ENCODE measurements at regions of chr20 and their contacts with region 1.

Region 1: GRCh38 chr20:50731055-50731871 is at the start of gene PARD6B:
- DNase-seq: peak; percentile 100
- H3K4me3 Mint-ChIP-seq: peak within 1 kb of the TSS; percentile 61
- H3K27ac Mint-ChIP-seq: peak within 1 kb of the TSS; percentile 99
- H3K4me1 Mint-ChIP-seq: peaks cover 56% of the 10 kb centered on the region
- H3K27me3 Mint-ChIP-seq: no peaks in the 10 kb centered on the region
- CTCF ChIP-seq: no peak
- total RNA-seq, gene PARD6B: 114 and 127 TPM in 2 replicates

Region 2: GRCh38 chr20:50625986-50626677 is 105.1 kb before region 1 on chr20:
- CTCF ChIA-PET with region 1: interaction called, 13 read pairs
- intact Hi-C with region 1: no loop called
- DNase-seq: peak; percentile 91
- H3K4me3 Mint-ChIP-seq: no peak overlapping the region
- H3K27ac Mint-ChIP-seq: peak overlapping the region; percentile 72
- H3K4me1 Mint-ChIP-seq: peaks cover 44% of the 10 kb centered on the region
- H3K27me3 Mint-ChIP-seq: no peaks in the 10 kb centered on the region
- CTCF ChIP-seq: peak; percentile 97

Region 3: DNA sequence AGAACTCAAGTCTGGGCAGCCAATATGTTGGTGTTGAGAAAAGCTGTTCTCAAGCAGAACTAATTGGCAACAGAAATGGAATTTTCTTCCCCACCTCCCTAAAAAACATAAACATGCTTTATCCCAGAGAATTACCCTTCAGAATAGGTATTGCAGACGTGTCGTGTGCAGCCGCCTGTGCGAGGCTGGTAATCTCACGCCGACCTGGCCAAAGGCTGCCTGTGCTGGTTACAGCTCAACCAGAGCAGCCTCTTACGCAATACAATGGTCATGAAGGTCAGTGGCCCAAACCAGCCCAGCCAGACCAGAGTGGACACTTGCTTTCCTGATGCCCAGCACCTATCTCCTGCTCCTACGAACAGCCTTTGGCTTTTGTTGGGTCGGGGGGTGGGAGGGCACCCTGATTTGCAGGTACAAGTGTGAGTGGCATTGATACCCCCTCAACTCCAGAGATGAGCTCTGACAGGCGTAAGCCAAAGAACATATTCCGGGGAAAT is 50.8 kb before region 1 on chr20:
- CTCF ChIA-PET with region 1: interaction called, 28 read pairs
- intact Hi-C with region 1: loop called (anchors 1 kb)
- DNase-seq: peak; percentile 83
- H3K4me3 Mint-ChIP-seq: peak overlapping the region; percentile 62
- H3K27ac Mint-ChIP-seq: peak overlapping the region; percentile 84
- H3K4me1 Mint-ChIP-seq: peaks cover 48% of the 10 kb centered on the region
- H3K27me3 Mint-ChIP-seq: no peaks in the 10 kb centered on the region
- CTCF ChIP-seq: no peak

Region 4: DNA sequence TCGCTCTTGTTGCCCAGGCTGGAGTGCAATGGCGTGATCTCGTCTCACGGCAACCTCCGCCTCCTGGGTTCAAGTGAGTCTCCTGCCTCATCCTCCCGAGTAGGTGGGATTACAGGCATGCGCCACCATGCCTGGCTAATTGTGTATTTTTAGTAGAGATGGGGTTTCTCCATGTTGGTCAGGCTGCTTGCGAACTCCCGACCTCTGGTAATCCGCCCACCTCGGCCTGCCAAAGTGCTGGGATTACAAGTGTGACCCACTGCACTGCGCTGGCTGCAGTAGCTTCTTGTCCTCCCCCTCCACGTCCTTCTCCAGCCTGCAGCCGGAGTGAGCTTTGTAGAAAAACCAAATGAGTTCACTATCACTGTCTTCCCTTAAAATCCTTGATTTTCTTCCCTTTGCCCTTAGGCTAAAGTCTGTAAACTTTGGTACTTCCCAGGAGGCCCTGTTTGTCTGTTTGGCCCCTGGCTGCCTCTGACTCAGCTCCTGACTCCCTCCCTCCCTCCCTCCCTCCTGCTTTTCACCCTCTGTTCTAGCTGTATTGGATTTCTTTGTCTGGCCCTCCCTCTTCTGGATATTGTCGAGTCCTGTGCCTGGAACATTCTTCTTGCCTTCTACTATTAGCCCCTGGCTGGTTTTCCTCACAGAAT is 13.0 kb after region 1 on chr20:
- CTCF ChIA-PET with region 1: interaction called, 50 read pairs
- intact Hi-C with region 1: loop called (anchors 1 kb)
- DNase-seq: peak; percentile 73
- H3K4me3 Mint-ChIP-seq: peak overlapping the region; percentile 63
- H3K27ac Mint-ChIP-seq: peak overlapping the region; percentile 90
- H3K4me1 Mint-ChIP-seq: peaks cover 88% of the 10 kb centered on the region
- H3K27me3 Mint-ChIP-seq: no peaks in the 10 kb centered on the region
- CTCF ChIP-seq: no peak

Region 5: GRCh38 chr20:50762435-50763201 is 31.4 kb after region 1 on chr20:
- CTCF ChIA-PET with region 1: interaction called, 4 read pairs
- intact Hi-C with region 1: loop called (anchors 2 kb)
- DNase-seq: peak; percentile 73
- H3K4me3 Mint-ChIP-seq: peak overlapping the region; percentile 73
- H3K27ac Mint-ChIP-seq: peak overlapping the region; percentile 100
- H3K4me1 Mint-ChIP-seq: peaks cover 85% of the 10 kb centered on the region
- H3K27me3 Mint-ChIP-seq: no peaks in the 10 kb centered on the region
- CTCF ChIP-seq: no peak

Region 6: GRCh38 chr20:50967586-50967985 is 236.3 kb after region 1 on chr20:
- CTCF ChIA-PET with region 1: no interaction called
- intact Hi-C with region 1: no loop called
- DNase-seq: no peak
- H3K4me3 Mint-ChIP-seq: no peak overlapping the region
- H3K27ac Mint-ChIP-seq: no peak overlapping the region
- H3K4me1 Mint-ChIP-seq: no peaks in the 10 kb centered on the region
- H3K27me3 Mint-ChIP-seq: peaks cover 67% of the 10 kb centered on the region
- CTCF ChIP-seq: no peak